A549 (cell line): ENCODE measurements at regions of chr9 and their contacts with region 1.

Region 1: DNA sequence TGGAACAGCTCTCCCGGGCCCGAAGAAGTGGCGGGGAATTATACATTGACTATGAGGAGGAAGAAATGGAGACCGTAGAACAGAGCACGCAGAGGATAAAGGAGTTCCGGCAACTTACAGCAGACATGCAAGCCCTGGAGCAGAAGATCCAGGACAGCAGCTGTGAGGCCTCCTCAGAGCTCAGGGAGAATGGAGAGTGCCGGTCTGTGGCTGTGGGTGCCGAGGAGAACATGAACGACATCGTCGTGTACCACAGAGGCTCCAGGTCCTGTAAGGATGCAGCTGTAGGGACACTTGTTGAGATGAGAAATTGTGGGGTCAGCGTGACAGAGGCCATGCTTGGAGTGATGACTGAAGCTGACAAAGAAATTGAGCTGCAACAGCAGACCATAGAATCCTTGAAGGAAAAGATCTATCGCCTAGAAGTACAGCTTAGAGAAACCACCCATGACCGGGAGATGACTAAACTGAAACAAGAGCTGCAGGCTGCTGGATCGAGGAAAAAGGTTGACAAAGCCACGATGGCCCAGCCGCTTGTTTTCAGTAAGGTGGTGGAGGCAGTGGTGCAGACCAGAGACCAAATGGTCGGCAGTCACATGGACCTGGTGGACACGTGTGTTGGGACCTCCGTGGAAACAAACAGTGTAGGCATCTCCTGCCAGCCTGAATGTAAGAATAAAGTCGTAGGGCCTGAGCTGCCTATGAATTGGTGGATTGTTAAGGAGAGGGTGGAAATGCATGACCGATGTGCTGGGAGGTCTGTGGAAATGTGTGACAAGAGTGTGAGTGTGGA is 129.5 kb upstream of the DMRT1 start:
- DNase-seq: no peak
- ATAC-seq: no peak
- H3K4me3 ChIP-seq: no peak overlapping the region
- H3K27ac ChIP-seq: no peak overlapping the region
- H3K4me1 ChIP-seq: peaks cover 2% of the 10 kb centered on the region; the same call in 2 of the 3 replicates
- CTCF ChIP-seq: no peak
- EP300 ChIP-seq: no peak
- POLR2A ChIP-seq: no peak
- RAD21 ChIP-seq: no peak

Region 2: DNA sequence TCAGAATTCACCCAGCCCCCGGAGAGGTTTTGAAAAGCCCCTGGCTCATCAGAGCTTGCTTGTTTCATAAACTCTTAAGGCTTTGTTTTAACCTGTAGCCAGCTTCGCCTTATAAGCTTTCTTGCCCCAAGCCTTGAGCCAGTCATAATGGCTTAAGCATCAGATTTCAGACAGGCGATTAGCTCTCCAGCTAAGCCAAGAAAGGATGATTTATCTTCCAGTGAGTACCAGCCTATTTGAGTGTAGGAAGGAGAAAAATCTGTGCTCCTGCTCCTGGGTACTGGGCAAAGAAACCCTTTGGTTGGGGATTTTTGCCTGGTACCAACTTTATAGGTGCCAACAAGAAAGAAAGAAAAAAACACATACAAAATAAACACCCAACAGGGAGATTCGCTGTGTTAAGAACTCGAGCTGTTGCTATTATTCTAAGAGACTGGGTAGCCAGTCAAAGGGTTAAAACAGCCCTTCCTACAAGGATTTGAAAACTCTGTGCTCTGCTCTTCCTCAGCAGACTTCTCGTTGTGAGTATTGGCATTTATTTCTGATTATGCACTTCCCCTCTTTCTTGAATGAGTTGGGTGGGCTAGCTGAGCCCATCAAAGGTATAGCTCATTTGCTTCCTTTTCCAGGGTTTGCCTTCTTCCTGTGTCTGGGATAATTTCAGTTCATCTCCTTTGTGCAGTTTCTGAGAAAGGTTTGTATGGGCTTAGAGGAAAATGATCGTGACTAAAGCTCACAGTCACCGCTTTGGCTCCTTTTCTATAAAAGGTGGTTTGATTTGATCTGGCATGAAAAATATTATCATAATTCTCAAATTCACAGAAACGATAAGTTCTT is 27.7 kb before region 1 on chr9:
- CTCF ChIA-PET with region 1: interaction called, 10 read pairs
- POLR2A ChIA-PET with region 1: no interaction called
- DNase-seq: no peak
- ATAC-seq: peak in 1 of 2 experiments; percentile 35; a peak in 4 of 6 replicates
- H3K4me3 ChIP-seq: no peak overlapping the region
- H3K27ac ChIP-seq: peak overlapping the region; percentile 39 to 50
- H3K4me1 ChIP-seq: peaks cover 49% of the 10 kb centered on the region
- CTCF ChIP-seq: no peak
- EP300 ChIP-seq: no peak
- POLR2A ChIP-seq: no peak
- RAD21 ChIP-seq: no peak